ENCODE measurements at regions of chr15 and their contacts with region 1.

Region 1: GRCh38 chr15:43433165-43433564 is 59.8 kb downstream of the TP53BP1 start:
- DNase-seq: no peak
- H3K4me3 ChIP-seq: no peak overlapping the region
- H3K27ac ChIP-seq: no peak overlapping the region
- H3K4me1 ChIP-seq: no peaks in the 10 kb centered on the region
- H3K27me3 ChIP-seq: no peaks in the 10 kb centered on the region
- CTCF ChIP-seq: no peak

Region 2: DNA sequence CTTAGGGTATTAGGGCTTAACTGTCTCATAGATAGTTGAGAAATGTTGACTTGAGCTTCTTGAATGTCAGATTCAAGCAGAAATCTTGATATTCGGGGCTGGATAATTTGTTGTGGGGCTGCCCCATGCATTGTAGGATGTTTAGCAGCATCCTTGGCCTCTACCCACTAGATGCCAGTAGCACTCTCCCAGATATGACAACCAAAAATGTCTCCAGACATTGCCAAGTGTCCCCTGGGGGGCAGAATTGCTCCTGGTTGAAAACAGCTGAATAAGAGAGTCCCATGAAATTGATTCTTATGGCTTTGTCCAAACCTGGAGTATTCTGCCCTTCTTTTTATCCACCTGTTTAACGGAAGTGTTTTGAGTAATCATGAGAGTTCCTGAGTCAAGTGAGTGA is 86.9 kb before region 1 on chr15:
- CTCF ChIA-PET with region 1: no interaction called
- POLR2A ChIA-PET with region 1: no interaction called
- intact Hi-C with region 1: no loop called
- DNase-seq: no peak
- H3K4me3 ChIP-seq: no peak overlapping the region
- H3K27ac ChIP-seq: no peak overlapping the region
- H3K4me1 ChIP-seq: no peaks in the 10 kb centered on the region
- H3K27me3 ChIP-seq: no peaks in the 10 kb centered on the region
- CTCF ChIP-seq: no peak

Region 3: DNA sequence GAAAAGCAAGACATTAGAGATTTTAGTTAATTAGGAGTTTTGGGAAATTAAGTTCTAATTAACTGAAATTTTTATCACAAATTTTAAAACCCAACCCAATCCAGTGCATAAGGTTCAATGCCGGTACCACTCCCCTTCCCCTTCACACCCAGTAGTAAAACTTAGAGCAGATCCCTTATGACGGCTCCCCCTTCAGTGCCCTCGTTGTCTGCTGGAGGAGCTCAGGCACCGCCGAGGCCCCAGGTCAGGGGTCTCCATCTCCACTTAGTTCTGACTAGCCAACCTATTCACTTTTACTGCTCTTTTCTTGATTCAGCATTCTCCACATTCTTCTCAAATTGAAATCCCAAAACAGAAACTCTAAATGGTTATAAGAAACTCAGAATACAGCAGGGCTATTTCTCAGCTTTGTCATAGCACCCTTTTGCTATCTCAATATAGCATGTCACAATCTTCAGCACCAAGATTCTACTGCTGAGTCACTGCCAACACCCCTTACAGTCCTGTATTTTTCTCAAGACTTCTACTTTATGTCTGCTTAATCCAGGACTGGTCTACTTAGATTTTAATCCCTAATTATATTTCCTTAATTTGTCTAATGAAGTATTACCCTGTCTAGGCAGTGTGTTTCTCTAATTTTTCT is 22.5 kb before region 1 on chr15:
- CTCF ChIA-PET with region 1: no interaction called
- POLR2A ChIA-PET with region 1: interaction called, 14 read pairs
- intact Hi-C with region 1: no loop called
- DNase-seq: no peak
- H3K4me3 ChIP-seq: no peak overlapping the region
- H3K27ac ChIP-seq: peak overlapping the region; percentile 35
- H3K4me1 ChIP-seq: no peaks in the 10 kb centered on the region
- H3K27me3 ChIP-seq: no peaks in the 10 kb centered on the region
- CTCF ChIP-seq: no peak

Measured in PC-9 (cell line).